Prostate gland (tissue), 2 donors: ENCODE measurements at regions of chr9 and their contacts with region 1.

Region 1: GRCh38 chr9:37119907-37120842 is at the start of gene ZCCHC7:
- DNase-seq: peak; percentile 93
- H3K4me3 ChIP-seq: peak within 1 kb of the TSS; percentile 83 to 87
- H3K27ac ChIP-seq: peak within 1 kb of the TSS; percentile 81 to 90
- H3K4me1 ChIP-seq: no peaks in the 10 kb centered on the region
- H3K27me3 ChIP-seq: no peaks in the 10 kb centered on the region
- CTCF ChIP-seq: peak in 1 of 4 experiments; percentile 13
- POLR2A ChIP-seq: peak; percentile 88
- total RNA-seq, gene ZCCHC7: 12.7 to 14.2 TPM

Region 2: GRCh38 chr9:37079370-37080164 is 40.6 kb before region 1 on chr9:
- intact Hi-C with region 1: loop called (anchors 5 kb)
- DNase-seq: peak; percentile 91
- H3K4me3 ChIP-seq: peak overlapping the region; percentile 79 to 96
- H3K27ac ChIP-seq: peak overlapping the region; percentile 79 to 80
- H3K4me1 ChIP-seq: no peaks in the 10 kb centered on the region
- H3K27me3 ChIP-seq: no peaks in the 10 kb centered on the region
- CTCF ChIP-seq: peak in 2 of 4 experiments; percentile 10 to 12
- POLR2A ChIP-seq: peak; percentile 65

Region 3: GRCh38 chr9:37187713-37188439 is 67.7 kb after region 1 on chr9:
- intact Hi-C with region 1: no loop called
- DNase-seq: no peak
- H3K4me3 ChIP-seq: no peak overlapping the region
- H3K27ac ChIP-seq: no peak overlapping the region
- H3K4me1 ChIP-seq: no peaks in the 10 kb centered on the region
- H3K27me3 ChIP-seq: no peaks in the 10 kb centered on the region
- CTCF ChIP-seq: no peak
- POLR2A ChIP-seq: no peak